ENCODE measurements at regions of chr3 and their contacts with region 1.

Region 1: GRCh38 chr3:69948246-69948862 is 51.2 kb upstream of the SAMMSON start:
- DNase-seq: no peak
- H3K4me3 ChIP-seq: no peak overlapping the region
- H3K27ac ChIP-seq: peak overlapping the region in 2 of 4 donors; percentile 8 to 28
- H3K4me1 ChIP-seq: peaks cover 7 to 28% (median 26%) of the 10 kb centered on the region in 4 donors
- H3K27me3 ChIP-seq: no peaks in the 10 kb centered on the region
- CTCF ChIP-seq: peak; percentile 59 to 70 (median 61)
- EP300 ChIP-seq: no peak
- POLR2A ChIP-seq: no peak

Region 2: DNA sequence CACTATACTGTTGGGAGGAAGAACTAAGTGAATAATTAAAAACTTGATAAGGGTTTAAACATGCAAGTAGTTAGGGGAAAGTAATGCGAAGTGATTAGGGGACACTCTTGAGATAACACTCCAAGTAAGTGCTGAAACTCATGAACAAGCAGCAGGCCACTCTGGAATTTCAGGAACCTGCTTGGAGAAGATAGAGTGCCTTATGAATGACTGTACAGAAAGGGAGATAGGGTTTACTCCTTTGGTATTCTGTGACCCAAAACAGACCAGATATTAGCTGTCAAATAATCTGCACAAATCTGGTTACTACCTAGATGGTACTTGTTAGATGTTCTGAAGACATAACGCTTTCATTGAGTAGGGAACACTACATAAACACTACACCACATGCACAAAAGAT is 648.1 kb before region 1 on chr3:
- intact Hi-C with region 1: loop called (anchors 5 kb)
- DNase-seq: no peak
- H3K4me3 ChIP-seq: no peak overlapping the region
- H3K27ac ChIP-seq: no peak overlapping the region
- H3K4me1 ChIP-seq: no peaks in the 10 kb centered on the region
- H3K27me3 ChIP-seq: no peaks in the 10 kb centered on the region
- CTCF ChIP-seq: no peak
- EP300 ChIP-seq: no peak
- POLR2A ChIP-seq: no peak

Region 3: DNA sequence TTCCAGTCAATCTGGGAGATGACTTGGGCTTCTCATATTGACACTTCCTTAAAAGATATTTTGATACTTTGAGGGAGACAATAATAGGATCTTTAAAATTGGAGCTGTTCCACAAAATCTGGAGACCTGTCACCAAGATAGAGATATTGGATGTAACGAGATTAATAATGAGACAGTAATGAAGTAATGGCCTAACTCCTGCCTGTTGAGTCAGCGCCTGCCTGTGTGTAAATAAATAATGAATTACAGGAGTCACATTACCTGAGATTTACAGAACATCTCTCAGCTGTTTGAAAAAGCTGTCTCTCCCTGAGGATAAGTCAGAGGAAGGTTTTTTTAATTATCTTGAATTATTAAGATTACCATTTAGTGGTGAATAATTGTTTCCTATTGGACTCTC is 252.9 kb before region 1 on chr3:
- intact Hi-C with region 1: no loop called
- DNase-seq: no peak
- H3K4me3 ChIP-seq: no peak overlapping the region
- H3K27ac ChIP-seq: no peak overlapping the region
- H3K4me1 ChIP-seq: peaks cover 0 to 8% (median 6%) of the 10 kb centered on the region in 4 donors
- H3K27me3 ChIP-seq: no peaks in the 10 kb centered on the region
- CTCF ChIP-seq: no peak
- EP300 ChIP-seq: no peak
- POLR2A ChIP-seq: no peak

Region 4: GRCh38 chr3:69791919-69792399 is 156.4 kb before region 1 on chr3:
- intact Hi-C with region 1: loop called (anchors 10 kb)
- DNase-seq: no peak
- H3K4me3 ChIP-seq: no peak overlapping the region
- H3K27ac ChIP-seq: peak overlapping the region; percentile 3 to 44 (median 26)
- H3K4me1 ChIP-seq: peaks cover 45 to 55% (median 46%) of the 10 kb centered on the region in 4 donors
- H3K27me3 ChIP-seq: no peaks in the 10 kb centered on the region
- CTCF ChIP-seq: peak; percentile 43 to 60 (median 56)
- EP300 ChIP-seq: no peak
- POLR2A ChIP-seq: no peak

Region 5: GRCh38 chr3:70177881-70178645 is 229.7 kb after region 1 on chr3:
- intact Hi-C with region 1: no loop called
- DNase-seq: no peak
- H3K4me3 ChIP-seq: no peak overlapping the region
- H3K27ac ChIP-seq: peak overlapping the region in 1 of 4 donors; percentile 13
- H3K4me1 ChIP-seq: peaks cover 0 to 18% (median 12%) of the 10 kb centered on the region in 4 donors
- H3K27me3 ChIP-seq: no peaks in the 10 kb centered on the region
- CTCF ChIP-seq: no peak
- EP300 ChIP-seq: no peak
- POLR2A ChIP-seq: no peak

Measured in esophagus muscularis mucosa (tissue), 4 donors.